Gastrocnemius medialis (tissue), 4 donors: ENCODE measurements at regions of chr4 and their contacts with region 1.

Region 1: DNA sequence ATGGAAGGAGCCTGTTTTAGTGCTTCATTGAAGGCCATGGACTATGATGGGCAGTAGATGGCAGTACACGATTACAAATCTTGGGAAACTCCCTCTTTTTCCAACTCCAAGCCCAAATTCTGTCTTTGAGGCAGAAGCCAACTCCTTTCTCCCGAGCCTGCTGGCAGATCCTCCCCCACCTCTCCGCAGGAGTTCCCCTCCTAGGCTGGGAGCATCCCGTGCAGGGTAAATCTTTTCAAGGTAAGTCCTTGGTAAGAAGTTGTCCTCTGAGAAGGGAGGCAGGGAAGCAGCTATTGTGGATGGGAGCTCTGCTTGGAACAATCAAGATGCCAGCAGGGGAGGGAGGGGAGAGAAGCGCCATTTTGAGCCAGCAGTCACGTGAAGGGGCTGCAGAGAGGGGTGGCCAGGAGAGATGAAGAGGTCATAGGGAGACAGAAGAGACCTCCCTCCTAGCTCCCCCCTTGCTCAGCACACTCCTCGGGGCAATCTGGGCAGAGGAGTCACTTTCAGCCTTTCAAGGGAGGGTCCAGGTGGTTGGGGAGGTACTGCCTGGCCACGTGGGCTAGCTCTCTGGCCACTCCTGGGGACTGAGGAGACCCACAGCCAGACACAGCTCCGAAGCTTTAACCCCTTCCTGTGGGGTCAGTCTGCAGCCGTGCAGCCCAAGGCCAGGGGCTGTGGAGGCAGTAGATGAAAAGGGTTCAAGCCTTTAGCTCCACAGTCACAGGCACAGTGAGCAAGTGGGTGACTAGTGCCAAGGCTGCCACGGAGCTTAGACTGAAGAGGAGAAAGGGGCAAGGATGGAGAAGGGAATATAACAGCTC is 9.6 kb downstream of the CC2D2A start:
- DNase-seq: peak in 1 of 2 donors; percentile 31
- ATAC-seq: peak; percentile 93 to 95
- H3K4me3 ChIP-seq: peak overlapping the region; percentile 27 to 56 (median 45)
- H3K27ac ChIP-seq: peak overlapping the region in 3 of 4 donors; percentile 12 to 63 (median 57)
- H3K4me1 ChIP-seq: no peaks in the 10 kb centered on the region
- H3K27me3 ChIP-seq: no peaks in the 10 kb centered on the region
- CTCF ChIP-seq: peak; percentile 49 to 69 (median 60)
- POLR2A ChIP-seq: no peak

Region 2: GRCh38 chr4:15577508-15577907 is 98.2 kb after region 1 on chr4:
- in situ Hi-C with region 1: no loop called
- intact Hi-C with region 1: no loop called
- DNase-seq: no peak
- ATAC-seq: no peak
- H3K4me3 ChIP-seq: no peak overlapping the region
- H3K27ac ChIP-seq: no peak overlapping the region
- H3K4me1 ChIP-seq: peaks cover 0 to 2% of the 10 kb centered on the region in 2 donors
- H3K27me3 ChIP-seq: no peaks in the 10 kb centered on the region
- CTCF ChIP-seq: no peak
- POLR2A ChIP-seq: no peak

Region 3: GRCh38 chr4:15649914-15650545 is 170.7 kb after region 1 on chr4:
- in situ Hi-C with region 1: loop called (anchors 5 to 25 kb)
- intact Hi-C with region 1: loop called (anchors 2 kb)
- DNase-seq: peak; percentile 18 to 55
- ATAC-seq: peak; percentile 76 to 84
- H3K4me3 ChIP-seq: peak overlapping the region in 1 of 4 donors; percentile 2
- H3K27ac ChIP-seq: peak overlapping the region; percentile 11 to 99 (median 30)
- H3K4me1 ChIP-seq: peaks cover 64 to 68% of the 10 kb centered on the region in 2 donors
- H3K27me3 ChIP-seq: no peaks in the 10 kb centered on the region
- CTCF ChIP-seq: peak; percentile 44 to 78 (median 74)
- POLR2A ChIP-seq: no peak

Region 4: DNA sequence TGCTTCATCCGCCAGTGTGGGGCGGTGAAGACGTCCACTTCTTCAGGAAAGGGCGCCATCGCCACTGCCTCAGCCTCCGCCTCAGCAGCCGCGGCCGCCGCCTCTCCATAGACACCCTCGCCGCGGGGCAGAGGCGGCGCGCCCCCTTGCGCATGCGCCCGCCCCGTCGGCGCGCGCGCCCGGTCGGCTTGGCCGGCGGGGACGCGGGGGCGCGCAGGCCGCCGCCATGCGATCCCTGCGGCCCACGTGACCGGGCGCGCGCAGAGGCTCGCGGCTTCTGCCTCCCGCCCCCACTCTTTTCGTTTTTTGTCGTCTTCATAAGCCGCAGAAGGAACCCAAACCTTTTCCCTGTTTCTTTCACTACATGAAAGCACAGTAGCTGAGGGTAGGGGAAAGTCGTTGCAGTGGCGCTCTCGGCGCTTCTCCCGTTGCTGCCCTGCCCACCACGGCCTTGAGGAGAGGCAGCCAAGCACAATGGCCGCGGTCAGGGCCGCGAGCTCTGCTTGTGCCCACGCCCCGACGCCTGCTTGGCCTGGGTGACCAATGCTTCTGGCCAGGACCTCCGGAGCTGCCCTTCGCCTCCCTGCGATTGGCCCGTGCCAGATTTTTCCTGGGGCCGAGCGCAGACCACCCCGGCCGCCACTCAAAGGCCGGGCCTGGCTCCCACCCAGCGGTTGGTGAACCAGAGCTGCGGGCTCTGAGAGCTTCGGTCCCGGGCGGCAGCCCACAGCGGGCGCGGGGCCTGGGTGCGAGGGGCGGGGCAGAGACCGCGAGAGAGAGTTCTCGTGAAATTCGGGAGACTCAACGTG is 176.1 kb after region 1 on chr4 and contains the start of gene FBXL5:
- in situ Hi-C with region 1: loop called in 1 of 4 experiments (anchors 25 kb)
- intact Hi-C with region 1: loop called (anchors 2 kb)
- DNase-seq: peak; percentile 42 to 74
- ATAC-seq: peak; percentile 78 to 87
- H3K4me3 ChIP-seq: peak within 1 kb of the TSS; percentile 74 to 94 (median 83)
- H3K27ac ChIP-seq: peak within 1 kb of the TSS; percentile 97 to 100 (median 98)
- H3K4me1 ChIP-seq: peaks cover 39 to 45% of the 10 kb centered on the region in 2 donors
- H3K27me3 ChIP-seq: no peaks in the 10 kb centered on the region
- CTCF ChIP-seq: no peak
- POLR2A ChIP-seq: peak; percentile 81 to 84
- total RNA-seq, gene FBXL5: 81.7 to 106 (median 89.8) TPM

Region 5: DNA sequence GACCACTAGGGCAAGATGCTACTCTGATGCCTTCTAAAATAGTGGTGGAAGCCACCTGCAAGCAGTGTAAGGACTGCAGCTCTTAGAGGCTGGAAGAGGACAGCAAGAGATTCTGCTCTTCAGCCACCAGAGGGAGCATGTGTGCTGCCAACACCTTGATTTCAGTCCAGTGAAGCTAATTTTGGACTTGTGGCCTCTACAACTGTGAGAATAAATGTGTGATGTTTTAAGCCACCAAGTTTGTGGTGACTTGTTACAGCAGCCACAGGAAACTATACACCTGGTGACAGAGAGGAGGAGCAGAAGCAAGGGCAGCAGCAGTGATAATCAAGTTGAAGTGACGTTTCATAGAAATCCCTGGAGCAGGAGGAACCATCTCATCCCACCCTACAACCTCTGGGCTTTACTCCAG is 403.4 kb after region 1 on chr4:
- in situ Hi-C with region 1: no loop called
- intact Hi-C with region 1: loop called (anchors 5 kb)
- DNase-seq: peak; percentile 9 to 35
- ATAC-seq: peak; percentile 87 to 97
- H3K4me3 ChIP-seq: no peak overlapping the region
- H3K27ac ChIP-seq: no peak overlapping the region
- H3K4me1 ChIP-seq: no peaks in the 10 kb centered on the region
- H3K27me3 ChIP-seq: no peaks in the 10 kb centered on the region
- CTCF ChIP-seq: peak; percentile 72 to 84 (median 77)
- POLR2A ChIP-seq: no peak

Region 6: GRCh38 chr4:15956179-15956850 is 477.0 kb after region 1 on chr4:
- in situ Hi-C with region 1: loop called in 1 of 4 experiments (anchors 25 kb)
- intact Hi-C with region 1: loop called (anchors 2 kb)
- DNase-seq: peak; percentile 59 to 75
- ATAC-seq: peak; percentile 91 to 96
- H3K4me3 ChIP-seq: no peak overlapping the region
- H3K27ac ChIP-seq: no peak overlapping the region
- H3K4me1 ChIP-seq: peaks cover 0 to 3% of the 10 kb centered on the region in 2 donors
- H3K27me3 ChIP-seq: no peaks in the 10 kb centered on the region
- CTCF ChIP-seq: peak; percentile 80 to 95 (median 87)
- POLR2A ChIP-seq: no peak

Region 7: GRCh38 chr4:15976456-15977447 is 497.5 kb after region 1 on chr4:
- in situ Hi-C with region 1: loop called in 2 of 4 experiments (anchors 25 kb)
- intact Hi-C with region 1: no loop called
- DNase-seq: no peak
- ATAC-seq: peak; percentile 62 to 78
- H3K4me3 ChIP-seq: no peak overlapping the region
- H3K27ac ChIP-seq: no peak overlapping the region
- H3K4me1 ChIP-seq: no peaks in the 10 kb centered on the region
- H3K27me3 ChIP-seq: no peaks in the 10 kb centered on the region
- CTCF ChIP-seq: no peak
- POLR2A ChIP-seq: no peak

Region 8: DNA sequence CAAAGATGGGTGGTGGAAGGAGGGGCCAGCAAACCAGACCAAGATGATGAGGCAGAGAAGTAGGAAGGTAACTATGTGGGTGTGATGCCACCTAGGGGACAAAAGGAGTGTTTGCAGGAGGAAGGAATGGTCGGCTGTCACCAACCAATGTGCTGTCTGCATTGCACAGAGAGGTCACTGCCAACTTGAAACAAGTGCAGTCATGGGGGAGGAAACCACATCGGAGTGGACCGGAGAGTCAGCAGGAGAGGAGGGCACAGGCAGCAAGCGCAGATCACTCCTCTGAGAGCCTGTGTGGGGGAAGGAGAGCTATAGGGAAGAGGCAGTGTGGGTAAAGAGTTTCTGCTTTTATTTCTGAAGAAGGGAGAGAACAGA is 522.2 kb after region 1 on chr4:
- in situ Hi-C with region 1: loop called in 3 of 4 experiments (anchors 10 to 25 kb)
- intact Hi-C with region 1: loop called (anchors 5 kb)
- DNase-seq: peak; percentile 20 to 56
- ATAC-seq: peak; percentile 89 to 98
- H3K4me3 ChIP-seq: no peak overlapping the region
- H3K27ac ChIP-seq: no peak overlapping the region
- H3K4me1 ChIP-seq: no peaks in the 10 kb centered on the region
- H3K27me3 ChIP-seq: no peaks in the 10 kb centered on the region
- CTCF ChIP-seq: peak; percentile 53 to 81 (median 73)
- POLR2A ChIP-seq: no peak